Right cardiac atrium (tissue), 5 donors: ENCODE measurements at regions of chr2 and their contacts with region 1.

Region 1: GRCh38 chr2:72220170-72220569 is 72.5 kb upstream of the CYP26B1 start:
- DNase-seq: peak in 1 of 3 donors; percentile 34
- ATAC-seq: no peak
- H3K4me3 ChIP-seq: no peak overlapping the region
- H3K27ac ChIP-seq: no peak overlapping the region
- H3K4me1 ChIP-seq: no peaks in the 10 kb centered on the region
- H3K27me3 ChIP-seq: no peaks in the 10 kb centered on the region

Region 2: DNA sequence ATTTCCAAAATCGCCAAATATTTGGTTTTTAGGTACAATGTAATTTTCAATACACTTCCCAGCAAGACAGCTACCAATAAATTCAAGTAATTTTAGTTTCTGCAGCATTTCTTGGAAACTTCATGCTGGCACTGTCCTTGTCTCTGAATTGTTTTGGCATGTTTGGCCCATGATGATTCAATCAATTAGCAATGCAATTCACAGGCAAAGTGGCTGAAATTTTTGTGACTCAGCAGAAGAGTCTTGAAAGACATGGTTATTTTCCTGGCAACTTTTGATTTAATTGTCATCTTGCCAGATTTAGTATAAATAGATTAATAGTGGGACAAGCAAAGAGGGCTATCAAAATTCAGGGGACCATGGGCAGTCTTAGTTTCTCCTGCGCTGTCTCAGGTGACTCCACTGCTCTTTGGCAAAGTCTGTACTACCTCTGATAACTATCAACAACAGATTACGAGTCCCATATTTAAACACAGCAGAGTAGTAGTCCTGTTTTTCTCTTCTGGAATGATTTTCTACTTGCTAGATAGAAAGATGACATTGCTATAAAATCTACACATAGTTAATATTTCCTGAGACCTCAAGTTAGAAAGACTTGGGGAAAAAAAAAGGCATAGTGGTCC is 16.4 kb after region 1 on chr2:
- intact Hi-C with region 1: loop called in 1 of 4 experiments (anchors 2 kb)
- DNase-seq: no peak
- ATAC-seq: no peak
- H3K4me3 ChIP-seq: no peak overlapping the region
- H3K27ac ChIP-seq: no peak overlapping the region
- H3K4me1 ChIP-seq: no peaks in the 10 kb centered on the region
- H3K27me3 ChIP-seq: no peaks in the 10 kb centered on the region